Activated T-helper 1 cell treated with anti-CD3 and anti-CD28 coated beads, Interleukin-12 subunit alpha, Interleukin-12 subunit beta, Interleukin-2, Interleukin-4 antibody, amounts not matched to agents 30 ng/mL and 10 ng/mL and 1 ng/mL, durations not matched to agents 14 hours and 24 hours and 36 hours (primary cell): ENCODE measurements at regions of chr17 and their contacts with region 1.

Region 1: GRCh38 chr17:21252796-21253645 is at the start of gene NATD1:
- DNase-seq: peak; percentile 70
- H3K4me3 Mint-ChIP-seq: peak within 1 kb of the TSS; percentile 83
- H3K27ac Mint-ChIP-seq: peak within 1 kb of the TSS; percentile 23
- H3K4me1 Mint-ChIP-seq: peaks cover 7% of the 10 kb centered on the region
- H3K27me3 Mint-ChIP-seq: peaks cover 13% of the 10 kb centered on the region
- total RNA-seq, gene NATD1: 1.6 and 1.7 TPM in 2 replicates

Region 2: GRCh38 chr17:21098934-21099689 is 153.9 kb before region 1 on chr17:
- intact Hi-C with region 1: loop called (anchors 1 kb)
- DNase-seq: peak; percentile 68
- H3K4me3 Mint-ChIP-seq: peak overlapping the region; percentile 92
- H3K27ac Mint-ChIP-seq: peak overlapping the region; percentile 88
- H3K4me1 Mint-ChIP-seq: peaks cover 27% of the 10 kb centered on the region
- H3K27me3 Mint-ChIP-seq: no peaks in the 10 kb centered on the region

Region 3: GRCh38 chr17:21263351-21263750 is 10.3 kb after region 1 on chr17:
- intact Hi-C with region 1: loop called (anchors 1 kb)
- DNase-seq: no peak
- H3K4me3 Mint-ChIP-seq: no peak overlapping the region
- H3K27ac Mint-ChIP-seq: no peak overlapping the region
- H3K4me1 Mint-ChIP-seq: peaks cover 11% of the 10 kb centered on the region
- H3K27me3 Mint-ChIP-seq: no peaks in the 10 kb centered on the region